Naive thymus-derived CD4-positive, alpha-beta T cell (primary cell): ENCODE measurements at regions of chr12 and their contacts with region 1.

Region 1: GRCh38 chr12:9741726-9742125 is 8.8 kb upstream of the CLECL1 start:
- DNase-seq: peak in 8 of 9 donors; percentile 63 to 95 (median 90)
- ATAC-seq: peak; percentile 84
- H3K4me3 ChIP-seq: peak overlapping the region; percentile 15
- H3K4me3 Mint-ChIP-seq: peak overlapping the region; percentile 22 to 95 (median 83)
- H3K27ac ChIP-seq: peak overlapping the region; percentile 76
- H3K27ac Mint-ChIP-seq: peak overlapping the region; percentile 89 to 100 (median 98)
- H3K4me1 ChIP-seq: peaks cover 55 to 59% of the 10 kb centered on the region in 2 donors
- H3K4me1 Mint-ChIP-seq: peaks cover 51 to 81% (median 71%) of the 10 kb centered on the region in 7 donors
- H3K27me3 ChIP-seq: no peaks in the 10 kb centered on the region
- H3K27me3 Mint-ChIP-seq: peaks cover 0 to 6% (median 0%) of the 10 kb centered on the region in 5 donors

Region 2: GRCh38 chr12:9049520-9050133 is 692.1 kb before region 1 on chr12:
- CTCF ChIA-PET with region 1: no interaction called
- POLR2A ChIA-PET with region 1: no interaction called
- intact Hi-C with region 1: no loop called
- DNase-seq: peak in 7 of 9 donors; percentile 41 to 71 (median 57)
- ATAC-seq: peak; percentile 84
- H3K4me3 ChIP-seq: no peak overlapping the region
- H3K4me3 Mint-ChIP-seq: no peak overlapping the region
- H3K27ac ChIP-seq: no peak overlapping the region
- H3K27ac Mint-ChIP-seq: peak overlapping the region in 4 of 9 donors; percentile 31 to 70 (median 40)
- H3K4me1 ChIP-seq: peaks cover 5 to 6% of the 10 kb centered on the region in 2 donors
- H3K4me1 Mint-ChIP-seq: peaks cover 2 to 32% (median 13%) of the 10 kb centered on the region in 7 donors
- H3K27me3 ChIP-seq: no peaks in the 10 kb centered on the region
- H3K27me3 Mint-ChIP-seq: peaks cover 0 to 4% (median 0%) of the 10 kb centered on the region in 5 donors

Region 3: DNA sequence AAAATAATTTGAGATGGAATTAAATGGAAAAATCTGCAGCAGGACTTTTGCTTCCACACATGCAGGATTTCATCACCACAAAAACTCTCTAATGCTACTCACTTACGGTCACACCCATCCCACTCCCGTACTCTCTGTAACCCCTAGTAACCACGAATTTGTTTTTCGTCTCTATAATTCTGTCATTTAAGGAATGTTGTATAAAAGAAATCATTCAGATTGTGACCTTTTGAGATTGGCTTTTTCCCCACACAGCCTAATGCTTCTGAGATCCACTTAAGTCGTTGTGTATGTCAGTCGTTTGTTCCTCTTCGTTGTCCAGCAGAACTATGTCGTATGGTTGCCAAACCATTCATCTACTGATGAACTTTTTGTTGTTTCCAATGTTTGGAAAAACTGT is 513.8 kb before region 1 on chr12:
- CTCF ChIA-PET with region 1: no interaction called
- POLR2A ChIA-PET with region 1: no interaction called
- intact Hi-C with region 1: no loop called
- DNase-seq: no peak
- ATAC-seq: no peak
- H3K4me3 ChIP-seq: no peak overlapping the region
- H3K4me3 Mint-ChIP-seq: no peak overlapping the region
- H3K27ac ChIP-seq: no peak overlapping the region
- H3K27ac Mint-ChIP-seq: no peak overlapping the region
- H3K4me1 ChIP-seq: no peaks in the 10 kb centered on the region
- H3K4me1 Mint-ChIP-seq: peaks cover 0 to 1% (median 0%) of the 10 kb centered on the region in 7 donors
- H3K27me3 ChIP-seq: no peaks in the 10 kb centered on the region
- H3K27me3 Mint-ChIP-seq: peaks cover 0 to 16% (median 5%) of the 10 kb centered on the region in 5 donors

Region 4: DNA sequence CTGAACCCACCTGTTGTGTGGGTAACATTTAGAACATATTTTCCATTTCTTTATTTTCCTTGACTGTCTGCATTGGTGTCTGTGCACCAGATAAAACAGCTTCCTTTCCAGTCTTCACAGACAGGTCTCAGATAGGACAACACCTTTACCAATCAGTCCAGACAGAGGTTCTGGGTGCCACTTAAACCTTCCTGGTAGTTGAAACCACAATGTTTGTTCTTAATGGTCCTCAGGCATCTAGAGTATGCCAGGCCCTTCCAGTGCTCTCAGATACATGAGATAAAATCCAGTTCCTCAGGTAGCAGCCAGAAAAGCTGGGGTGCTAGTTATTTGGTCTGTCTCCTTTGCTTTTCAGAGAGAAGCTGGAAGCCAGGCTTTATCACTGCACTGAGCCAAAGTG is 79.2 kb before region 1 on chr12:
- CTCF ChIA-PET with region 1: interaction called, 7 read pairs
- POLR2A ChIA-PET with region 1: interaction called, 21 read pairs
- intact Hi-C with region 1: no loop called
- DNase-seq: no peak
- ATAC-seq: peak; percentile 49
- H3K4me3 ChIP-seq: peak overlapping the region; percentile 25
- H3K4me3 Mint-ChIP-seq: peak overlapping the region; percentile 6 to 98 (median 60)
- H3K27ac ChIP-seq: peak overlapping the region; percentile 75
- H3K27ac Mint-ChIP-seq: peak overlapping the region; percentile 65 to 99 (median 86)
- H3K4me1 ChIP-seq: peaks cover 42 to 73% of the 10 kb centered on the region in 2 donors
- H3K4me1 Mint-ChIP-seq: peaks cover 73 to 99% (median 94%) of the 10 kb centered on the region in 7 donors
- H3K27me3 ChIP-seq: no peaks in the 10 kb centered on the region
- H3K27me3 Mint-ChIP-seq: no peaks in the 10 kb centered on the region